Activated naive CD4-positive, alpha-beta T cell treated with anti-CD3 and anti-CD28 coated beads, Interleukin-2, amount 10 ng/mL, durations not matched to agents 7 days and 5 days (primary cell): ENCODE measurements at regions of chr5 and their contacts with region 1.

Region 1: DNA sequence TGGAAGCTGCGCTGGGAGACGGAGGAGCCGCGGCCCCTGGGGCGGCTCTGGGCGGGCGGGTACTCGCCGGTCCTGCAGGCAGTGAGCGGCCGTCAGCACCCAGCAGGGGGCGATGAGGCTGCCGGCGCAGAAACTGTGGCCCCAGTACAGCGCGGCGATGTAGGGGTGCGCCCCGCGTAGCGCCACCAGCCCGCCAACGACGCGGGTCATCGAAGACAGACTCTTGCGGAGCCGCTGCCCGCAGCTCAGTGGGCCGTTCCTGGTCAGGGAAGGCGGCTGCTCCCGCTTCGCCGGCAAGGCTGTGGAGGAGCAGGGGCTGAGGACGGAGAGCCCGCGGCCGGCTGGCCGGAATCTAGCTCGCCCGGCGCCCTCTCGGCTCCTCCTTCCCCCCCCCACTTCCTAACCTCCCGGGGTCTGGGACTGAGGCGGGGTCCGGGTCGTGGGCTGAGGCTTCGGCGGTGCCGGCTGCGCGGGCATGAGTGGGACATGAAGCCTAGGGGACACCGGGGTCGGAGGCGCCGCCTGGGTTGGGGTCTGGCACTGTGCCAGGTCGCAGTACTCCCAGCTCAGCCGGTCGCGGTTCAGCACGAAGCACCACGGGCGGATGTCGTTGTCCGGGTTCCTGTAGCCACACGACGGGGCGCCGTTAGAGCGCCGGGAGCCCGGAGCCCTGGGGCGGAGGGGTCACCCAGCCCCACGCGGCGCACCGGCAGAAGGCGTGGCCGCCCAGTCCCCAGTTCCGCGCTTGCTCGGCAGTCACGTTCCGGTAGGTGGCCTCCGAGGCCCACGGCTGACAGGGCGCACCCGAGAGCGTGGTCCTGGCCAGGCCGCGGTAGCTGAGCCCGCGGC is 3.6 kb upstream of the PFN3 start:
- DNase-seq: peak; percentile 90
- H3K4me3 Mint-ChIP-seq: peak overlapping the region; percentile 71
- H3K27ac Mint-ChIP-seq: no peak overlapping the region
- H3K4me1 Mint-ChIP-seq: peaks cover 38% of the 10 kb centered on the region
- H3K27me3 Mint-ChIP-seq: peaks cover 95% of the 10 kb centered on the region

Region 2: GRCh38 chr5:177414481-177414880 is 10.5 kb after region 1 on chr5:
- CTCF ChIA-PET with region 1: interaction called, 13 read pairs
- DNase-seq: no peak
- H3K4me3 Mint-ChIP-seq: no peak overlapping the region
- H3K27ac Mint-ChIP-seq: no peak overlapping the region
- H3K4me1 Mint-ChIP-seq: peaks cover 37% of the 10 kb centered on the region
- H3K27me3 Mint-ChIP-seq: peaks cover 28% of the 10 kb centered on the region

Region 3: GRCh38 chr5:177440211-177440971 is 36.4 kb after region 1 on chr5:
- CTCF ChIA-PET with region 1: interaction called, 104 read pairs
- DNase-seq: no peak
- H3K4me3 Mint-ChIP-seq: no peak overlapping the region
- H3K27ac Mint-ChIP-seq: peak overlapping the region; percentile 30
- H3K4me1 Mint-ChIP-seq: peaks cover 79% of the 10 kb centered on the region
- H3K27me3 Mint-ChIP-seq: no peaks in the 10 kb centered on the region

Region 4: GRCh38 chr5:177454397-177455035 is 50.5 kb after region 1 on chr5:
- CTCF ChIA-PET with region 1: interaction called, 228 read pairs
- DNase-seq: peak; percentile 92
- H3K4me3 Mint-ChIP-seq: peak overlapping the region; percentile 80
- H3K27ac Mint-ChIP-seq: peak overlapping the region; percentile 84
- H3K4me1 Mint-ChIP-seq: peaks cover 29% of the 10 kb centered on the region
- H3K27me3 Mint-ChIP-seq: peaks cover 44% of the 10 kb centered on the region

Region 5: GRCh38 chr5:177497292-177498033 is 93.4 kb after region 1 on chr5 and contains the start of gene PDLIM7:
- CTCF ChIA-PET with region 1: interaction called, 60 read pairs
- DNase-seq: peak; percentile 95
- H3K4me3 Mint-ChIP-seq: peak within 1 kb of the TSS; percentile 81
- H3K27ac Mint-ChIP-seq: no peak within 1 kb of the TSS
- H3K4me1 Mint-ChIP-seq: peaks cover 36% of the 10 kb centered on the region
- H3K27me3 Mint-ChIP-seq: peaks cover 32% of the 10 kb centered on the region